Left lung (tissue), 14 donors: ENCODE measurements at regions of chr12 and their contacts with region 1.

Region 1: DNA sequence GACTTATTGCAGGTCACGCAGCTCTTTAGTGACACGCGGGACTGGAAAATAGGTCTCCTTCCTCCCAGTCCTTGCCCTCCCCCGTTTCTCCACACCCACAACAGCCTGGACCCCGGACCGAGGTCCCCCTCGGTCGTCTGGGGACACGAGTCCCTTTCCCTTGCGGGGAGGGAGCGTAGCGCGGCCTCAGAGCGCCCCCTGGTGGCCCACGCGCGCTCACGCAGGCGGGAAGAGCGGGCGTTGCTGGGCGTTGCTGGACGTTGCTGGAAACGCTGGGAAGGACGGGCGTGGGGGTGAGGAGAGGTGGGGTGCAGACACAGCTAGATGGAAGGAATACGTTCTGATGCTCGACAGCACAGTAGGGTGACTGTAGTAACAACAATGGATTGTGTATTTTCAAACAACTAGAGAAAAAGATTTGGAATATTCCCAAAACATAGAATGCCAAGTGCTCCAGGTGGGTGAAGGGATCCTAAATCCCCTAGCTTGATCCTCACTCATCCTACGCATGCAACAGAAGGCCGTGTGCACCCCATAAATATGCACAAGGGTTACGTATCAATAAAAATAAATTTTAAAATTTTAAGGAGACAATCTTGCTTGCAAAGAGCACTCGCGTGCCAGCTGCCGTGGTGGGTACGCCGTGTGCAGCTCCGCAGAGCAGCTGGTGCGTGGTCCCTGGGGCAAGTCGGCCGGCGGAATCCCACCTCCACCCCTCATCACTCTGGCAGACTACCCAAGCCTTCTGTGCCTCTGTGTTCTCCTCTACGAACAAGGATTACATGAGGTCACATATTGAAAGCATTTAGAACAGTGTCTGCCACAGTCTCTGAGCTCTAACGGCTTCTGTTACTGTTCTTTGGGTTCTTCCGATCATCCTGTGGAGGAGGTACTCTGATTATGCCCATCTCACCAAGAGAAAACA is 87.4 kb downstream of the B4GALNT3 start:
- DNase-seq: peak; percentile 36 to 96 (median 68)
- ATAC-seq: peak; percentile 92
- H3K4me3 ChIP-seq: peak overlapping the region in 1 of 2 donors; percentile 1
- H3K27ac ChIP-seq: peak overlapping the region in 1 of 2 donors; percentile 64
- H3K4me1 ChIP-seq: peaks cover 0 to 22% of the 10 kb centered on the region in 2 donors
- H3K27me3 ChIP-seq: peaks cover 0 to 25% of the 10 kb centered on the region in 2 donors
- CTCF ChIP-seq: peak; percentile 96 to 99

Region 2: DNA sequence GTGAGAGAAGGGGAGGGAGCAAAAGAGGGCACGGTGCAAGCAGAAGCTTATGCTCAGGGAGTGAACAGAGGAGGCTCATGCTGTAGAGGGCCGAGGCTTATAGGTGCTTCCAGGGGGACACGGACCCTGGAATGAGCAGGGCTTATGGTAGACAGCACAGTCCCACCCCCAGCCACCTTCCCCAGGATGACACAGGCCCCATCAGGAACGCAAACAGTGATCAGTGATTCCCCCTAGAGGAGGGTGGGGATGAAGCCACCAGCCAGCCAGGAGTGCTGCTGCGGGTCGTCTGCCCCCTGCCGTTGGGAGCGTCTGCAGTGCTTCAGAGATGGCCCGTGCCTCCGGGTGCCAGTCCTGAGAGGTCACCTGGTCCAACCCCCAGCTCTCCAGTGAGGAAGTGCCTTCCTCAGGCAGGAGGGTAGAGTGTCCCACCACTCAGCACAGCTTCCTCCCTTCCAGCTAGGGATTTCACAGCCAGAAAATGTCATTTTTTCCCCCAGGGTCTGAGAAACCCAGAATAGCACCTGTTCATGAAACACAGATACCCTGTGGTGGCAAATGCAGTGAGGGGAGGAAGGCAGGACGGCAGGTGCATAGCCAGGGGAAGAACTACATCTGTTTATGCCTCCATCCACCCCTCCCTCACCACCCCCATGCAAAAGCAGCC is 394.0 kb before region 1 on chr12:
- intact Hi-C with region 1: no loop called
- DNase-seq: peak in 3 of 4 donors; percentile 50 to 80 (median 55)
- ATAC-seq: peak; percentile 85
- H3K4me3 ChIP-seq: no peak overlapping the region
- H3K27ac ChIP-seq: no peak overlapping the region
- H3K4me1 ChIP-seq: no peaks in the 10 kb centered on the region
- H3K27me3 ChIP-seq: peaks cover 0 to 3% of the 10 kb centered on the region in 2 donors
- CTCF ChIP-seq: peak in 1 of 2 donors; percentile 40

Region 3: GRCh38 chr12:452667-453210 is 94.4 kb before region 1 on chr12:
- intact Hi-C with region 1: loop called (anchors 5 to 10 kb)
- DNase-seq: peak in 2 of 4 donors; percentile 41 to 81
- ATAC-seq: peak; percentile 52
- H3K4me3 ChIP-seq: no peak overlapping the region
- H3K27ac ChIP-seq: no peak overlapping the region
- H3K4me1 ChIP-seq: no peaks in the 10 kb centered on the region
- H3K27me3 ChIP-seq: peaks cover 6 to 26% of the 10 kb centered on the region in 2 donors
- CTCF ChIP-seq: no peak

Region 4: GRCh38 chr12:459430-460258 is 87.5 kb before region 1 on chr12 and contains the start of gene B4GALNT3:
- intact Hi-C with region 1: loop called (anchors 5 to 10 kb)
- DNase-seq: peak; percentile 26 to 89 (median 54)
- ATAC-seq: peak; percentile 91
- H3K4me3 ChIP-seq: peak within 1 kb of the TSS; percentile 41 to 49
- H3K27ac ChIP-seq: peak within 1 kb of the TSS in 1 of 2 donors; percentile 35
- H3K4me1 ChIP-seq: peaks cover 0 to 17% of the 10 kb centered on the region in 2 donors
- H3K27me3 ChIP-seq: peaks cover 21 to 74% of the 10 kb centered on the region in 2 donors
- CTCF ChIP-seq: no peak
- polyA plus RNA-seq, gene B4GALNT3: 2.7 to 7.7 (median 4.4) TPM

Region 5: DNA sequence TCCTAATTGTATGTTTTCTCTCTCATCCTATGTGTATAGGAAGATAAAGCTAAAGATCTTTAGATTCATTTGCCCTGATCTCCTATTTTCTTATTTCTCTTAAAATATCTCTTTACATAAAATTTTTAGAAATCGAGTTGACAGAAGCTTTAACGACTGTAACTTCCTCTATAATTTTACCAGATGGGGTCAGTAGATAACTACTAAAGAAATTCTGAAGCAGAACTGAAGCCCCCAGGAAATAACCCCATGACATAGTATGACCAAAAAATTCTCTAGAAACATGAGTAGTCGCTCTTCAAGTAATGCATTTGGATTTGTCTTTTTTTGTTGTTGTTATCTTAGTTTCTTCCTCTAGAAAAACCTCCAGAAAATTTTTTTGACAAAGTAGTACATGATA is 731.9 kb after region 1 on chr12:
- intact Hi-C with region 1: no loop called
- DNase-seq: no peak
- ATAC-seq: no peak
- H3K4me3 ChIP-seq: no peak overlapping the region
- H3K27ac ChIP-seq: no peak overlapping the region
- H3K4me1 ChIP-seq: peaks cover 0 to 6% of the 10 kb centered on the region in 2 donors
- H3K27me3 ChIP-seq: no peaks in the 10 kb centered on the region
- CTCF ChIP-seq: no peak